ENCODE measurements at regions of chr1 and their contacts with region 1.

Region 1: DNA sequence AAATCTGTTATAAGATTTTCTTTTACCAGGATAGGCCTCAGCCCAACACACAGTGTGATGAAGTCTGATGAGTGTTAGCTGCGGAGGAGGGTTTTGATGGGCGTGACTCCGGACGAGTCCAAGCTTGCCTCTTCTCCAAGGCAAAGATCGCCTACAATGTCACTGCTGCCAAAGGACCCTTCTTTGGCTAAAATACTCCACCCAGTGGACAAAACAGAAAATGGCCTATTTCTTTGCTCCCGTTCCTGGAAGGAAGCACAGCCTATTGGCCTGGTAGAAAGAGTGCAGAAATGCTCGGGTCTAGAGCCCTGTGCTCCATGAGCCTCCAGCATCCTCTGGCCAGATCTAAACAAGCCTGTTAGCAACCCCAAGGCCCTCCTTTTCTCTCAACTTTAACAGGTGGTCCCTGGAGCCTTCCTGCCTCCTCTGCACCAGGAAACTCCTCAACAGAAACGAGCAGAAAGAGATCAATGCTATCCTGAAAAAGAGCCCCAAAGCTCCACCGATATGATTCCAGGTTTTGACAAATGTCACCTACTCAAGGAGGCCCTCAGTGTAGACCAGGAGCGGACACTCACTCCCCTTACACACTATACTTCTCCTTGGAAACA is 3.4 kb upstream of the CASQ2 start:
- DNase-seq: peak; percentile 73
- ATAC-seq: peak; percentile 81 to 91

Region 2: DNA sequence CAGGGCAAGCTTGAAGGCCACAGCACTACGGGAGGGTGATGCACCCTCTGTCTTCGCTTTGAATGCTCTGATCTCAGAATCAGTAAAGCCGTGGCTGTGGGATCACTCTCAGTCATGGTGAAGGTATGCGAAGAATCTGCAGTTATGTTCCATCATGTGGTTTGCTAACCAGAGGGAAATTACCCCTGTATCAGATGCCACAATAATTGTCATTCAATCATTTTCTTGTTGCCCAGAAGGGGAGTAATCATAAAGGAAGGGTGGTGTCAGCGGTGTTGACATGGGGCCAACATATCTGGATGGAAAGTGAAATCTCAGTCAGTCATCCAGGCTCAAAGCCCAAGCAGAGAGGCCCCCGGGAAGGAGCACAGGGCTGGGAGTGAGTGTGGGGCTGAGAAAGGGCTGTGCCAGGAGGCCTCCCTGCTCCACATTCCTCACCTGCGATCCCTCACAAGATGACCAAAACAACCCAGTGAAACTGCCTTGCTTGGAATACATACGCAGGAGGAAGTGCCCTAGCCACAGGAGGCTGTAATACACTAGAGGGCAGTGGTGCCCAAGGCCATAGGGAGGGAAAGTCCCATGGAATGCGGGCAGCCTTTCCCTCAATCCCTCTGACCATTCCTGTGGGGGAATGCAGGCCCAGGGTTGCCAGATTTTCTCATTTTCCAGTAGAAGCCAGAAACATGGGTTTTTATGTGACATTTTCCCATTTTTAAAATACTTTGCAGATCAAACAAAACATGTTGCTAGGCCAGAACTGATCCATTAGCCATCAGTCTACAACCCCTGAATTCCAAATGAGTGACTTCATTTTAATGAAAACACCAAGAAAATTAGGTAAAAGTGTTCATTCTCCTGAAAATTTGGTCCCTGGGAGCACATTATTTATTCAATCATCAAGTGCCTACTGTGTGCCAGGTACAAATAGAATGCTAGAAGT is 225.9 kb before region 1 on chr1:
- intact Hi-C with region 1: loop called in 1 of 2 experiments (anchors 5 kb)
- DNase-seq: peak; percentile 50
- ATAC-seq: peak; percentile 89 to 93

Region 3: GRCh38 chr1:115609021-115609420 is 162.9 kb before region 1 on chr1:
- intact Hi-C with region 1: loop called (anchors 2 to 10 kb)
- DNase-seq: no peak
- ATAC-seq: no peak

Region 4: DNA sequence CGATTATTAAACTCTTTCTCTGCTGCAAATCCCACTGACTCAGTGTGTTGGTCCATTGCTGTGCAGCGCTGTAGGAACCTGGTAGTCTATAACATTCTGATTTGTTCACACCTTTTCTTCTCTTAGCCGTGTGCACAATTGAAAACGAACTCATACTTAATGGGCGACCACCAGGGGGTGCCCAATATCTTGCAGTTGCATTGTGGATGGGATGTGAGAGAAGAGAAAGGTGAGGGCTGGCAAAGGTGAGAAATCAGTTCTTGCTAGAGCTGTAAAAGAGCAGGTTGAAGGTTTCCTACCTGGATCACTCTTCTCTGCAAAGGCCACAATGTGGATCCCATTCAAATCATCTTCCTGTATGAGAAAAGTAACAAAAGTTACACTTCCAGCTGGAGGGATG is 54.4 kb before region 1 on chr1:
- intact Hi-C with region 1: loop called in 1 of 2 experiments (anchors 5 kb)
- DNase-seq: peak; percentile 53
- ATAC-seq: peak in 1 of 2 donors; percentile 31

Region 5: DNA sequence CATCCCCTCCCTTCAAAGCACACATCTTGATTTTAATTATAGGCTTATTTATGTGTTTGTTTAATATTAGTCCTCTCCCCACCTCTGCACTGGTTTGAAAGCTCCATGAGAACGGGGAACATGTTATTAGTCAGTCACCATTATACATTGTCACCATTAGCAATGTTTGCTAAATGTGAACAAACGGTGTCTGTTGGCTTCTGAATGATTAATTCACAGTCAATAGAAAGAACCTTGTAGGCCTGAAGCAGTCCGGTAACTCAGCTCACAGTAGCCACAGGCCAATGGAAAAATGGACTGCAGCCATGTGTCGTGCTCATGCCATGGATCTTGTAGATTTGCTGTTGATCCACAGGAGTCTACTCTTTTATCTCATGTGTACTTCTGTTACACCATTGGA is 118.6 kb after region 1 on chr1:
- intact Hi-C with region 1: no loop called
- DNase-seq: no peak
- ATAC-seq: no peak